A673 (cell line): ENCODE measurements at regions of chr5 and their contacts with region 1.

Region 1: DNA sequence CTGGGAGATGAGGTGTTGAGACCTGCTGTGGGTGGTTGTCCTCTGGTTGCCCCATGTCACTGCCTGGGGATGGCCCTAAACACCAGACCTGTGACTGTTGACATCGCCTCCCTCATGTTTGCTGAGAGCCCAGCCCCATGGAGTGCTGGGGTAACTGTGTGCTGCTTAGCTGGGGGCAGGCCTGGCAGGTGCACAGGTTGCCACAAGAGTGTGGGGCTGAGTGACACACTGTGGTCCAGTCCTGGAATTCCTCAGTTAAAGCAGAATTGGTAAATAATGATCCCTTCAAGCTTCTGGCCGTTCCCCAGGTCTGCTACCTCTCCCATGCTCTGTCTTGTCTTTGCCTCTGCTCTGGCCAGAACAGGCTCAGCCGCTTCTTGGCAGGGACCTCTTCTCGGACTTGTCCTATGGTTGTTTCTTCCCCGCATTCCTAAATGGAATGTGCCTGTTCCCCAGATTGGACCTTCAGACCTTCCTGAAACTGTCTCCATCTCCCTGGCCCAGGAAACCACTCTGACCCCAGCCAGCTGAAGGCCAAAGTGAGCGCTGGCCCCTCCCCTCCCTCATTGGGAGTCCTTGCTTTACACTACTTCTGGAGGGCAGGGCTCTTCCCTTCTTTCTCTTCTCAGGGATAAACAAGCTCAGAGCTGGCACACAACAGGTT is 61.2 kb upstream of the PITX1 start:
- DNase-seq: no peak
- H3K4me3 ChIP-seq: no peak overlapping the region
- H3K27ac ChIP-seq: no peak overlapping the region
- H3K4me1 ChIP-seq: no peaks in the 10 kb centered on the region
- H3K27me3 ChIP-seq: no peaks in the 10 kb centered on the region
- CTCF ChIP-seq: no peak

Region 2: DNA sequence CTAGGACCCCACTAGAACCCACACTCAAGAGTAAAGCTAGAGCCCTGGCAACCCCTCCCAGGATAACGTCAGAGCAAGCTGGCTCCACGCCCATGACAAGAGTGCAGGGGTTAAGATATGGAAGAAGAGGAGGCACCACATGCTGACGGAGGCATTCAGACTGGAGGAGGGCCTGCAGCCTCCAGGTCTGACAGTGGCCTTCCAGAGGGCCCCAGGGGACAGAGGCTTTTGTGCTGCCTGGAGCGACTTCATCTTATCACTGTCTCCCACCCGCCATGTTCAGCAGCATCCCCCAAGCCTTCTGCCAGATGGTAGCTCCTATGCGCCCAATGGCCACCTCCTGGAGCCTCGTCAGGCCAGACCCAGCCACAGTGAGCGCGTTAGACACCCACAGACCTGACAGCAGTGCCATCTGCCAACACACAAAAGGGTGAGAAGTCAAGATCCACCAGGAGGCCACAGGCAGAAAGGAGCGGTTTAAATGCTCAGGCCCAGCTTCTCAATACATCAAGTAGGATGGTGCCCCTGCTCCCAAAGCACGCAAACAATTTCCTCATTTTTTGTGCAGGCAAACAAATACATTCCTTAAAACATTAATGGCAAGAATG is 1192.6 kb before region 1 on chr5:
- CTCF ChIA-PET with region 1: no interaction called
- POLR2A ChIA-PET with region 1: interaction called, 16 read pairs
- intact Hi-C with region 1: no loop called
- DNase-seq: no peak
- H3K4me3 ChIP-seq: no peak overlapping the region
- H3K27ac ChIP-seq: no peak overlapping the region
- H3K4me1 ChIP-seq: peaks cover 51% of the 10 kb centered on the region
- H3K27me3 ChIP-seq: no peaks in the 10 kb centered on the region
- CTCF ChIP-seq: no peak

Region 3: DNA sequence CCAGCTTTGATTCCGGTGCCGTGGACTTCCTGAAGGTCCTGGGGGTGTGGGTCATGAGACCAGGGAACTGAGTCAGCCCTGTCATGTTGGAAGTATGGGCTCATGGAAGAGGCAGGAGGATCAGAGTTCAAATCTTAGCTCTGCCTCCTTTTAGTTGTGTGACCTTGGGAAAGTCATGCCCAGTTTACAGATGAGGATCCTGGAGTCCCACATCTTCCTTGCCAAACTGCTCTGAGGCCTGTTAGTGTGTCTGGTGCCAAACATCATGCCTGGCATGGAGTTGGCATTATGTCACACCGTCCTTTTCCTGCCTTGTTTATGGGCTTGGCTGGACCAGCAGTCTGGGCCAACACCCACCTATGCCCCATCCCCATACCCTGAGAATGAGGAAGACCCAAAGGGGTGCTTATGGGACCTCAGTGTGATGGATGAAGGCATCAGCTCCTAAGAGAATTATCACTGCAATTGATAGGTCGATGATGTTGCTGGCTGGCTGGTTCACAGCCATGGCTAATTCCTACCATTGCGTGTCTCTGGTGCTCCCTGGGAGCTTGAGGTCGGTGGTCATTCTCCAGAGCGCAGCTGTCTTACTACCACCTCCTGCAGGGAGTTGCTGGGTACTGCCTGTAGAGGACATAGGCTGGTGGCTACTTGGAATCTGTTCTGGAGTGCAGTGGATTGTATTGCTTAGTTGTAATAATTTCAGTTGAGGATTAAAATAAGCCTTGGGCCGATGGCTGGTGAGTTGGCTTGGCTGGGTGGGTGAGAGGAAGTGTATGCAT is 79.3 kb after region 1 on chr5:
- CTCF ChIA-PET with region 1: no interaction called
- POLR2A ChIA-PET with region 1: no interaction called
- intact Hi-C with region 1: no loop called
- DNase-seq: no peak
- H3K4me3 ChIP-seq: no peak overlapping the region
- H3K27ac ChIP-seq: no peak overlapping the region
- H3K4me1 ChIP-seq: no peaks in the 10 kb centered on the region
- H3K27me3 ChIP-seq: peaks cover 37% of the 10 kb centered on the region
- CTCF ChIP-seq: peak; percentile 43; the same call in 1 of the 2 replicates

Region 4: DNA sequence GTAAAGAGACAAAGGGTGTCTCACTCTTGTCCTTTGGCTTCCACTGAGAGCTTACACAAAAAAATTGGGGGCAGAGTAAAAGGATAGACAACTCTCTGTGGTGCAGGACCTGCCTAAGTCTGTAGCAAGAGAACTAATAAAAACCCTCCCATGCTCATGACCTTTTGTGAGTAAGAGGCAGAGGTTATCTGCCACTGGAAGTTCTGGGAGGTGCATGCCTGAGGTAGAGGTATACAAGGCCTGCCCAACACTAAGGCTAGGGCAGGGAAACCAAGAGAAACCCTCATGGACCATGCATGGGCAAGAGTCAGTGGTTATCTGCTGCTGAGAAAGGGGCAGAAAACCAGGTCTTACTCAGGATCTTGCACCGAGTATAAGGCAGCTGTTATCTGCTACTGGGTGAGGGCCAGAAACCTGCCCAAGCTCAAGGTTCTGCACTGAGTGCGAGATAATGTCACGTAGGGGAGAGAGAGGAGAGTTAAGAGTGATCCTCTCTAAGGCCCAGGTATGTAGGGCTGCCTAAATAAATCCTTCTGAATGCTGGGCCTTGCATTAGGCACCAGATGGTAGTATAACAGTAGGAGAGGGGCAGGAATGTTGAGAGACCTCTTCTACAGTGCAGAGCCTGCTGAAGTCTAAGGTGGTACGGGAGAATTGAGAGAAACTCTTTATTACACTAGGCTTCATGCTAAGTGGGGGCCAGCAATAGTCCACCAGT is 160.4 kb after region 1 on chr5:
- CTCF ChIA-PET with region 1: no interaction called
- POLR2A ChIA-PET with region 1: no interaction called
- intact Hi-C with region 1: no loop called
- DNase-seq: no peak
- H3K4me3 ChIP-seq: no peak overlapping the region
- H3K27ac ChIP-seq: no peak overlapping the region
- H3K4me1 ChIP-seq: no peaks in the 10 kb centered on the region
- H3K27me3 ChIP-seq: no peaks in the 10 kb centered on the region
- CTCF ChIP-seq: no peak

Region 5: DNA sequence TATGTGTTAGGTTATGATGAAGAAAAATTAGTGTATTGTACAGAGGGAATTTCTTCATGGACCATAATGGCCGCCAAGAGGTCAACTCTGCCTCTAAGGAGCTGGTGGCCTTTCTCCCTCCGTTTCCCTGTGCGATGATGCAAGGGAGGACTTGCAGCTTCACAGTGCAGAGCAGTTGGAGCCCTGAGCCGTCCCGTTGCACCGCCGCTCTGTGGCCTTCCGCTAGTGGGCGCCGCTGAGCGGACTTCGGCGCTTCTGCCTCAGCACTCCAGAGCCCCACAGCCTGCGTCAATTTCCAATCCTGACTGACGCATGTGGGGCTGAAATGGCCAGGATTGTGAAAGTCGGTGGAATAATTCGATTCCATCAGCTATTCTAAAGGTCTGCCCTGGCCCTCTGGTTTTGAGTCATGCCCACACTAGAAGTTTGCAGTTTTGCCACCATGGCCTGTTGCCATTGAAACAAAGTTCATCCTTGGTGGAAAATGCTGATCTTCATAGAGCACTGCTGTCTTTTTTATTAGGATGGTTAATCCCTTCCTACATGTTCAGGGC is 882.3 kb after region 1 on chr5:
- CTCF ChIA-PET with region 1: no interaction called
- POLR2A ChIA-PET with region 1: no interaction called
- intact Hi-C with region 1: no loop called
- DNase-seq: peak; percentile 76
- H3K4me3 ChIP-seq: no peak overlapping the region
- H3K27ac ChIP-seq: no peak overlapping the region
- H3K4me1 ChIP-seq: peaks cover 4% of the 10 kb centered on the region
- H3K27me3 ChIP-seq: no peaks in the 10 kb centered on the region
- CTCF ChIP-seq: peak; percentile 87